ENCODE measurements at regions of chr1 and their contacts with region 1.

Region 1: GRCh38 chr1:25997828-25998761 is at the start of gene PAFAH2:
- DNase-seq: peak; percentile 99
- H3K4me3 Mint-ChIP-seq: peak within 1 kb of the TSS; percentile 92
- H3K27ac Mint-ChIP-seq: peak within 1 kb of the TSS; percentile 96
- H3K4me1 Mint-ChIP-seq: peaks cover 22% of the 10 kb centered on the region
- H3K27me3 Mint-ChIP-seq: peaks cover 2% of the 10 kb centered on the region
- total RNA-seq, gene PAFAH2: 6.8 and 7.6 TPM in 2 replicates

Region 2: GRCh38 chr1:25819576-25820246 is 178.4 kb before region 1 on chr1 and contains the start of gene MTFR1L:
- intact Hi-C with region 1: loop called (anchors 1 kb)
- DNase-seq: peak; percentile 99
- H3K4me3 Mint-ChIP-seq: peak within 1 kb of the TSS; percentile 96
- H3K27ac Mint-ChIP-seq: peak within 1 kb of the TSS; percentile 92
- H3K4me1 Mint-ChIP-seq: peaks cover 31% of the 10 kb centered on the region
- H3K27me3 Mint-ChIP-seq: no peaks in the 10 kb centered on the region
- total RNA-seq, gene MTFR1L: 30.0 and 31.9 TPM in 2 replicates

Region 3: GRCh38 chr1:25895365-25895993 is 102.6 kb before region 1 on chr1:
- intact Hi-C with region 1: loop called (anchors 1 kb)
- DNase-seq: peak; percentile 97
- H3K4me3 Mint-ChIP-seq: no peak overlapping the region
- H3K27ac Mint-ChIP-seq: peak overlapping the region; percentile 64
- H3K4me1 Mint-ChIP-seq: peaks cover 24% of the 10 kb centered on the region
- H3K27me3 Mint-ChIP-seq: no peaks in the 10 kb centered on the region

Region 4: GRCh38 chr1:25971066-25971810 is 26.9 kb before region 1 on chr1:
- intact Hi-C with region 1: loop called (anchors 1 kb)
- DNase-seq: peak; percentile 77
- H3K4me3 Mint-ChIP-seq: peak overlapping the region; percentile 47
- H3K27ac Mint-ChIP-seq: peak overlapping the region; percentile 89
- H3K4me1 Mint-ChIP-seq: peaks cover 25% of the 10 kb centered on the region
- H3K27me3 Mint-ChIP-seq: no peaks in the 10 kb centered on the region

Region 5: GRCh38 chr1:26009796-26010460 is 11.8 kb after region 1 on chr1:
- intact Hi-C with region 1: no loop called
- DNase-seq: no peak
- H3K4me3 Mint-ChIP-seq: no peak overlapping the region
- H3K27ac Mint-ChIP-seq: no peak overlapping the region
- H3K4me1 Mint-ChIP-seq: no peaks in the 10 kb centered on the region
- H3K27me3 Mint-ChIP-seq: peaks cover 12% of the 10 kb centered on the region

Region 6: GRCh38 chr1:26035959-26036755 is 38.1 kb after region 1 on chr1:
- intact Hi-C with region 1: loop called (anchors 2 kb)
- DNase-seq: peak; percentile 95
- H3K4me3 Mint-ChIP-seq: peak overlapping the region; percentile 91
- H3K27ac Mint-ChIP-seq: peak overlapping the region; percentile 63
- H3K4me1 Mint-ChIP-seq: peaks cover 13% of the 10 kb centered on the region
- H3K27me3 Mint-ChIP-seq: peaks cover 13% of the 10 kb centered on the region

Region 7: GRCh38 chr1:27816921-27817630 is 1819.0 kb after region 1 on chr1:
- intact Hi-C with region 1: no loop called
- DNase-seq: no peak
- H3K4me3 Mint-ChIP-seq: no peak overlapping the region
- H3K27ac Mint-ChIP-seq: no peak overlapping the region
- H3K4me1 Mint-ChIP-seq: no peaks in the 10 kb centered on the region
- H3K27me3 Mint-ChIP-seq: no peaks in the 10 kb centered on the region

Measured in activated CD4-positive, alpha-beta T cell treated with anti-CD3 and anti-CD28 coated beads, Interleukin-2, amount 10 ng/mL, durations not matched to agents 24 days and 14 days (primary cell).